Heart right ventricle (tissue), 16 donors: ENCODE measurements at regions of chr10 and their contacts with region 1.

Region 1: DNA sequence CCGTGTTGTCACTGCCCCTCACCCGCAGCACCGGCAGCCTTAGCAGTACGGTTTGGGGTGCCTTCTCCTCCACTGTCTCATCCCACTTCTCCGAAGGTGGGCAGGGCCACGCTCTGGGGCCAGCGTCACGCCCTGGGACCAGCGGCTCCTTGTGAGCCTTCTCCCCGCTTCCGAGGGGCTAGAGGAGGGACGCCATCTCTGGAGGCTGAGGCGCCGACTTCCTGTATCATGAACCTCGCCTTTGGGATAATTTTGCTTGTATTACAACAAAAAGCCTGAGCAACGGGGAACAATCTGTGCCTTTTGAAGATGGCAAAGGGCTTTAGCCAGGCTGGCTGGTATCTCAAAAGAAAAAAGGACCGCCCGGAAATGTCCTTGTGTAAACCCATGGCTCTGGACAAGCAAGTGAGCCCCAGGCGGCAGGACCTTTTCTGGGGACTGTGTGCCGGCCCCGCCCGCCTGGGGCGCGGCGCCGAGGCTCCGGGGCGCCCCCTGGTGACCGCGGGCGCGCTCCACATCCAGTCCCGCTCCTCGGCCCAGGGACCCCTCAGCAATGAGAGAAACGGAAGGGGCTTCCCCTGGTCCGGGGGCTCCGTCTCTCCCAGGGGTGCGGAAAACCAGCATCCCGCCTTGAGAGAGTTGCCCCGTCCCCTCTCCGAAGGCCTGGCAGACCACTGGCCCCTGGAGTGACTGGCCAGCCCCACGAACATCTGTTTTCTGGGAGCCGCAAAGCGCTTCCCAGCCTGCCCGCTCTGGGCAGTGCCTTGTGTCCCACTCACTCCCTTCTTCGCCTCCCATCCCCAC is 3.8 kb downstream of the DEPP1 start:
- DNase-seq: peak; percentile 69 to 76
- ATAC-seq: peak; percentile 65 to 80 (median 76)
- H3K4me3 ChIP-seq: peak overlapping the region in 8 of 10 donors; percentile 16 to 87 (median 74)
- H3K27ac ChIP-seq: peak overlapping the region; percentile 42 to 97 (median 91)
- H3K4me1 ChIP-seq: peaks cover 35 to 87% (median 70%) of the 10 kb centered on the region in 9 donors
- H3K27me3 ChIP-seq: no peaks in the 10 kb centered on the region
- CTCF ChIP-seq: peak; percentile 95 to 100 (median 98)

Region 2: GRCh38 chr10:44010873-44011602 is 963.8 kb before region 1 on chr10:
- intact Hi-C with region 1: no loop called
- DNase-seq: peak in 1 of 2 donors; percentile 39
- ATAC-seq: peak in 7 of 8 donors; percentile 31 to 90 (median 75)
- H3K4me3 ChIP-seq: no peak overlapping the region
- H3K27ac ChIP-seq: peak overlapping the region in 6 of 10 donors; percentile 5 to 57 (median 18)
- H3K4me1 ChIP-seq: peaks cover 0 to 57% (median 38%) of the 10 kb centered on the region in 9 donors
- H3K27me3 ChIP-seq: no peaks in the 10 kb centered on the region
- CTCF ChIP-seq: no peak

Region 3: GRCh38 chr10:44878706-44879530 is 95.9 kb before region 1 on chr10:
- intact Hi-C with region 1: loop called in 1 of 10 experiments (anchors 10 kb)
- DNase-seq: peak; percentile 86 to 91
- ATAC-seq: peak; percentile 90 to 97 (median 95)
- H3K4me3 ChIP-seq: peak overlapping the region in 9 of 10 donors; percentile 35 to 61 (median 52)
- H3K27ac ChIP-seq: peak overlapping the region in 9 of 10 donors; percentile 11 to 72 (median 60)
- H3K4me1 ChIP-seq: peaks cover 0 to 34% (median 16%) of the 10 kb centered on the region in 9 donors
- H3K27me3 ChIP-seq: peaks cover 0 to 6% (median 0%) of the 10 kb centered on the region in 7 donors
- CTCF ChIP-seq: peak in 6 of 9 donors; percentile 10 to 39 (median 22)

Region 4: DNA sequence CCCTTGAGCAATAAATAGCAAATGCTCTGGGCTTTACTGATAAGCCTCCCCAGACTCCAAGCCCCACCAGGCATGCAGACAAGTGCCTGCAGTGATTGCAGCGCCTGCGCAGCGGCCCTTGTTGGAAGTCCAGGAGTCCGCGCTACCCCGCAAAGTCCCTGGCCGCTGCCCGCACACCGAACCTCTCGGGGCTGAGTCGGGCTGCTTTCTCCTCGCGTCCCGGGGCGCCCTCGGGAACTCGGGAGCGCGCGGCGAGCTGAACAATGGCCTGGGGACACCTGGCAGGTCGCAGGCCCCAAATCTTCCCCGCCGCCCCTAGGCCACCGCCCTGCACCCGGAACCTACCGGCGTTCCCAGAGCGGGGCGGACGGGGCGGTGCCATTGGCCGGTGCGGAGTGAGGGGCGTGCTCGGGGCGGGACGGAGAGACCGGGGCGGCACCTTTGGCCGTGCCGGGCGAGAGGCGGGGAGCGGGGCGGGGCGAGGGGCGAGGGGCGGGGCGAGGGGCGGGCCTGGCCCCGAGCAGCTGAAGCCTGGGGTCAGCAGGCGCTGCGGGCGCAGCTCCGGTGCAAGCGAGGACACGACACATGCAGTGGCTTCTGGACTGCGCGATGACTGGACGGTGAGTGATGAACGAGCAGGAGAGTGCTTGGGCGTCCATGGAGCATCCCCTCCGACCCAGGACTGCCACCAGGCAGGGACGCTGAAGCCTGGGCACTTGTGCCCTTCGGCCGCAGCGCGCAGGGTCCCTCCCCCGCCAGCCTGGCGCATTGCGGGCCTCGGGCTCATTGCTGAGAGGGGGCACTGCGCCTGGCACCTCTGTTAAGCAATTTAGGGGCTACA is 15.4 kb before region 1 on chr10 and contains the start of gene RASSF4:
- intact Hi-C with region 1: loop called in 1 of 10 experiments (anchors 2 kb)
- DNase-seq: peak; percentile 94 to 97
- ATAC-seq: peak; percentile 88 to 95 (median 93)
- H3K4me3 ChIP-seq: peak within 1 kb of the TSS; percentile 65 to 92 (median 74)
- H3K27ac ChIP-seq: peak within 1 kb of the TSS; percentile 89 to 98 (median 94)
- H3K4me1 ChIP-seq: peaks cover 23 to 84% (median 81%) of the 10 kb centered on the region in 9 donors
- H3K27me3 ChIP-seq: no peaks in the 10 kb centered on the region
- CTCF ChIP-seq: peak in 1 of 9 donors; percentile 2
- total RNA-seq, gene RASSF4: 73.3 to 120 (median 79.9) TPM

Region 5: GRCh38 chr10:45000752-45001380 is 26.0 kb after region 1 on chr10 and contains the start of gene ZNF22:
- intact Hi-C with region 1: loop called in 2 of 10 experiments (anchors 2 kb)
- DNase-seq: peak; percentile 80 to 81
- ATAC-seq: peak; percentile 50 to 83 (median 68)
- H3K4me3 ChIP-seq: peak within 1 kb of the TSS; percentile 29 to 75 (median 68)
- H3K27ac ChIP-seq: peak within 1 kb of the TSS; percentile 94 to 100 (median 97)
- H3K4me1 ChIP-seq: peaks cover 19 to 83% (median 70%) of the 10 kb centered on the region in 9 donors
- H3K27me3 ChIP-seq: no peaks in the 10 kb centered on the region
- CTCF ChIP-seq: peak in 3 of 9 donors; percentile 24 to 37 (median 32)
- total RNA-seq, gene ZNF22: 11.0 to 17.2 (median 15.4) TPM